ENCODE measurements at regions of chr21 and their contacts with region 1.

Region 1: GRCh38 chr21:45354755-45355369 is 50.1 kb upstream of the COL18A1 start:
- DNase-seq: no peak

Region 2: DNA sequence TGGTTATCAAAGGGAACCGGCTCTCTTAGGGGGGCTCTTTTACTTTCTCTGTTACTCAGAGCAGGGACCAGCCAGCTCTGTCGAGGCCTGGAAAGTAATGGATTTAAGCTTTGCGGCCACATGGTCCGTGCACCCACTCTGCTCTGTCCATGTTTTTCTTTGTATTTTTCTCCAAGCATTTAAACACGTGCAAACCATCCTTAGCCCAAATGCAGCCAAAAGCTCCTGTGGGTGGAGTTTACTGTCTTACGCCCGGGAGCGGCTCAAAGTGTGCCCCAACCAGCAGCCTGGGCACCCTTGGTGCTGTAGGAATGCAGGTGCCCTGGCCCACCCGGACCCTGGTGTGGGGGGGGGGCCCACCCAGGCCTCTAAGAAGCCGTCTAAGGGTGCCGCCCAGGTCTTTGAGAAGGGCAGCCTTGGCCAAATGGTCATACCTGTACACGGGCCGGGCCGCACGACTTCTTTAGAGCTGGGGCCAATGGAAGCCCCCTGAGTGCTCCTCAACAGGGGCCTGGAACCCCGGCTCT is 37.9 kb before region 1 on chr21:
- intact Hi-C with region 1: loop called in 1 of 2 experiments (anchors 1 kb)
- DNase-seq: peak; percentile 47

Region 3: DNA sequence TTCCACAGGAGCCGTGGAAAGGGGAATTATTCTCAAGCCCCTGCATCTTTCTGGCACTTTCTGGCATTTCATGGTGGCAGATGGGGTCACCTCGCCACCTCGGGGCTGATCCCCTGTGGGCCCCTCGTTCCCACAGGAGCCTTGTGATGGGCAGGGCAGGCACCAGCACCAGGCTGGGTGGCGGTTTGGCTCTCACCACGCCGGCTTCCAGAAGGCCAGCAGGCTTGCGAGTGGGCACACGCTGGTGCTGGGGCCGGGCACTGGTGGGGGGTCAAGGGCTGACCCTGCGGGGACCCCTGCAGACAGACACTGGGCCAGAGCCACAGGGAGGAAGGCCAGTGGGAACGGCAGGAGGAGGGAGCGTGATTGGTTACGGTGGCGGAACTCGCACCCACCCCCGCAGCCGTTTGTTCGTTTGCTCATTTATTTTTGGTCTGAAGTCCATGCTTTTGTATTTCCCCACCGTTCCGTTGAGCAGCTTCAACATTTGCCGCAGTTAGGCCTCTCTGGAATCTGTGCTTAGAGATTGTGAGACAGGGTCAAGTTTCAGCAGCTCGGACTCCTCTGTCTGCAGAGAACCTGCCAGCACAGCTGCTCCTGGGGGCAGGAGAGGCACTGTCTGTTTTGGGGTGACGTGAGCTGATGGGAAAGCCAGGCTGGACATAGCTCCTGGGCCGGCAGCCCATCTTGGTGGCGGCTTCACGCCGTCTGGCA is 55.4 kb after region 1 on chr21:
- intact Hi-C with region 1: no loop called
- DNase-seq: peak; percentile 70

Region 4: GRCh38 chr21:45454926-45455673 is 100.2 kb after region 1 on chr21:
- intact Hi-C with region 1: no loop called
- DNase-seq: peak; percentile 81